T-cell (primary cell): ENCODE measurements at regions of chr6 and their contacts with region 1.

Region 1: DNA sequence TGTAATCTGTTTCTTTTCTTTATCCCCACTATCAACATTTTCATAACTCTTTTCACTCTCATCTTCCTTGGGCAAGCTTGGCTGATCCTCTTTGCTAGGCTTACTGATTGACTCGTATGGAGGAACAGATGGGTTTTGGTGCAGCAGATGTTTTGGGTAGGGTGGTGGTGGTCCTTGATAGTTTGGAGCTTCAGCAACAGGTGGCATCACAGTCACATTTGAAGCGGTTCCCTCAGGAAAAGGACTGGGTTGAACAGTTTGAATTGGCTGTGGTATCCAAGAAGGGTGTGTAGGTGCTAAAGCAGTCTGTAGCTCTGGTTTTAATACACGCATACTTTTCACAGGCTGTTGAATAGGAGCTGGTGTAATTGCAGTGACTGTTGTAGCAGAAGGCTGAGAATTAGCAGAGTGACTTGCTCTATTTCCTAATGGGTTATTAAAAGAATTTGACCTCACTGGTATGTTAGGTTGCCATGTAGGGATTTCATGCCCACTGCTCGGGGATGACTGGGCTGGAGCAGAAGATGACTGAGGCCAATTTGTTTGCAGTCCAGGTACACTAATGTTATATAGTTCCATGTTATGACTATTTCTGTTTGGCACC is 34.5 kb downstream of the LATS1 start:
- DNase-seq: no peak
- ATAC-seq: no peak
- H3K4me3 ChIP-seq: no peak overlapping the region
- H3K4me3 Mint-ChIP-seq: no peak overlapping the region
- H3K27ac ChIP-seq: no peak overlapping the region
- H3K27ac Mint-ChIP-seq: no peak overlapping the region
- H3K4me1 ChIP-seq: peaks cover 0 to 5% of the 10 kb centered on the region in 2 experiments
- H3K4me1 Mint-ChIP-seq: peaks cover 20 to 27% (median 24%) of the 10 kb centered on the region in 3 donors
- H3K27me3 ChIP-seq: no peaks in the 10 kb centered on the region
- H3K27me3 Mint-ChIP-seq: no peaks in the 10 kb centered on the region

Region 2: GRCh38 chr6:149593443-149593842 is 89.9 kb before region 1 on chr6:
- CTCF ChIA-PET with region 1: no interaction called
- POLR2A ChIA-PET with region 1: no interaction called
- DNase-seq: no peak
- ATAC-seq: no peak
- H3K4me3 ChIP-seq: no peak overlapping the region
- H3K4me3 Mint-ChIP-seq: no peak overlapping the region
- H3K27ac ChIP-seq: no peak overlapping the region
- H3K27ac Mint-ChIP-seq: no peak overlapping the region
- H3K4me1 ChIP-seq: no peaks in the 10 kb centered on the region
- H3K4me1 Mint-ChIP-seq: no peaks in the 10 kb centered on the region
- H3K27me3 ChIP-seq: no peaks in the 10 kb centered on the region
- H3K27me3 Mint-ChIP-seq: no peaks in the 10 kb centered on the region

Region 3: GRCh38 chr6:149628875-149629510 is 54.4 kb before region 1 on chr6:
- CTCF ChIA-PET with region 1: no interaction called
- POLR2A ChIA-PET with region 1: no interaction called
- DNase-seq: no peak
- ATAC-seq: no peak
- H3K4me3 ChIP-seq: no peak overlapping the region
- H3K4me3 Mint-ChIP-seq: no peak overlapping the region
- H3K27ac ChIP-seq: no peak overlapping the region
- H3K27ac Mint-ChIP-seq: peak overlapping the region in 1 of 2 donors; percentile 3
- H3K4me1 ChIP-seq: no peaks in the 10 kb centered on the region
- H3K4me1 Mint-ChIP-seq: peaks cover 0 to 12% (median 0%) of the 10 kb centered on the region in 3 donors
- H3K27me3 ChIP-seq: no peaks in the 10 kb centered on the region
- H3K27me3 Mint-ChIP-seq: no peaks in the 10 kb centered on the region

Region 4: DNA sequence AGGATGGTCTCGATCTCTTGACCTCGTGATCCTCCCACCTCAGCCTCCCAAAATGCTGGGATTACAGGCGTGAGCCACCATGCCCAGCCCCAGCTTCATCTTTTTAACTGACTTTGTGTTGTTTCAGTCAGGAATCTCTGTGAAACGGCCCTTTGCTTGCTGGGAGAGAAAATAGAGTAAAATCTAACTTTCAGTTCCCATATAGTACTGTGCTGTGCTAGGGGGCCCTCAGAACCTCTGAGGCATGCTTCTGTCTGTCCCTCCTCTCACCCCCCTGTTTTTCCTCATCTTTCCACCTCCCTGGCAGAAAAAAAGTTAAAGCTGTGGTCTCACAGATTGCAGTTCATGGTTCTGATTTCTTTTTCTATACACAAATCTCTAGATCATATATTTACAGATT is 132.4 kb after region 1 on chr6:
- CTCF ChIA-PET with region 1: no interaction called
- POLR2A ChIA-PET with region 1: interaction called in 1 of 2 experiments, 18 read pairs
- DNase-seq: no peak
- ATAC-seq: no peak
- H3K4me3 ChIP-seq: no peak overlapping the region
- H3K4me3 Mint-ChIP-seq: no peak overlapping the region
- H3K27ac ChIP-seq: no peak overlapping the region
- H3K27ac Mint-ChIP-seq: no peak overlapping the region
- H3K4me1 ChIP-seq: no peaks in the 10 kb centered on the region
- H3K4me1 Mint-ChIP-seq: peaks cover 0 to 6% (median 3%) of the 10 kb centered on the region in 3 donors
- H3K27me3 ChIP-seq: no peaks in the 10 kb centered on the region
- H3K27me3 Mint-ChIP-seq: no peaks in the 10 kb centered on the region